Activated CD4-positive, alpha-beta T cell treated with anti-CD3 and anti-CD28 coated beads for 36 hours (primary cell): ENCODE measurements at regions of chr4 and their contacts with region 1.

Region 1: DNA sequence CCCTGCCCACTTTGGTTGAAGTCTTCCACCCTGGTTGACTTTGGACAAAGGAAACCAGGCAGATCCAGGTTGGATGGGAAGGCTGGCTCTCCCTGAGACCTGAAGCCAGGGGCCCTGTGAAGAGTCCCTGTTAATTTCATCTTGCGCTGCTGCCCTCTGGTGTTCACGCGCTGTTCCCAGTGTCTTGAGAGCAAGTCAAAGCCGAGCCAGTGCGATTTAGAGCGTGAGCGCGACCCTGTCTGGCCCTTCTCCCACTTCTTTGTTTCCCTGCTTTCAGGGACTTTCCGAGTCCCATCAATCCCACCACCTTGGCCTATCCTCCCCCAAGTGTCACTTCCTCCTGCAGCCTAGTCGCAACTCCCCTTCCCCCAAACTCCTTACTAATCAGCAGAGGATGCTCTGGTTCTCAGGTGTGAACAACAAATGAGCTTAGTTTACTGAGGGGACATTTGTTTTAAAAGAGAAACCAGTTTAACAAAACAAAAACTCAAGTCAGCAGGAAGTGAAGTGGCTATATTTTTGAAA is 25.8 kb upstream of the CHRNA9 start:
- DNase-seq: peak; percentile 96
- ATAC-seq: peak; percentile 70
- H3K4me3 Mint-ChIP-seq: peak overlapping the region; percentile 71
- H3K27ac Mint-ChIP-seq: peak overlapping the region; percentile 95
- H3K4me1 Mint-ChIP-seq: peaks cover 86% of the 10 kb centered on the region
- H3K27me3 Mint-ChIP-seq: no peaks in the 10 kb centered on the region

Region 2: DNA sequence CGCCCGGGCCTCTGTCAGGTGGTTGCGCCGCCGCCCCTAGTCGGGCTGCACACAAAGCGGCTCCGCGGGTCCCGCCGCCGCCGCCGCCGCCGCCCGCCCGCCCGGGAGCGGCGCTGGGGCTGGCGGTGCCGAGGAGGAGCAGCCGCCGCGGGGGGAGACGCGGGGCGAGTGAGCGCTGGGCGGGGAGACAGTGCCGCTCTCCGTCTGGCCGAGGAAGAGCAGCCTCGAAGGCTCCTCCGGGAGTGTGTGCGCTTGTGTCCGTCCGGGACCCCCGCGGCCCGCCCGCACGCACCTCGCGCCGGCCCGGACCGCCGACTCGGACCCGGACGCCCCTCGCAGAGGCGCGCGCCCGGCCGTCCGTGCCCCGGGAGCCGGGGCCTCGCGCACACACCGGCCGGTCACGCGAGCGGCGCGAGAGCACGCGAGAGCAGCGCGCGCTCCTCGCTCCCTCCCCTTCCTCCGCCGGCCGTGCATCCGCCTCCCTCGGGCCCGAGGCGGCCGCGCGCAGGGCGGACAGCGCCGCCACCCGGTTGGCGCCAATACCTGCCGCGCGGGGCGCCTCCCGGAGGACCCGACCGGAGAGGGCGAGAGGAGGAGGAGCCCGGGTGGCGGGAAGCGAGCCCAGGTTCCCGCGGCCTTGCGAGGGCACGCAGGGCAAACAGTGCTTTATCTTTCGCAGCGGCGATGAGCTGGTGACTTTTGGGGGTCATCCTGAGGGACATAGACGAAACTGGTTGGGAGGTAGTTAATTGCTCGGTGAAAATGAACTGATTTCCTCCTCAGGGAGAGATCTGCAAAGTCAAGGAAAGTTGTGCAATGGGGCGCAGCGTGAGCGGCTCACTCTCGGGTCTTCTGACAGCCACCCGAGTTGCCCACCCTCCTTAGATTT is 331.6 kb before region 1 on chr4 and contains the start of gene PDS5A:
- CTCF ChIA-PET with region 1: interaction called, 5 read pairs
- POLR2A ChIA-PET with region 1: no interaction called
- intact Hi-C with region 1: loop called in 1 of 2 experiments (anchors 5 kb)
- DNase-seq: peak; percentile 95
- ATAC-seq: peak; percentile 90
- H3K4me3 Mint-ChIP-seq: peak within 1 kb of the TSS; percentile 80
- H3K27ac Mint-ChIP-seq: peak within 1 kb of the TSS; percentile 98
- H3K4me1 Mint-ChIP-seq: peaks cover 38% of the 10 kb centered on the region
- H3K27me3 Mint-ChIP-seq: no peaks in the 10 kb centered on the region
- total RNA-seq, gene PDS5A: 98.5 to 102 TPM

Region 3: GRCh38 chr4:40205259-40206198 is 103.8 kb before region 1 on chr4:
- CTCF ChIA-PET with region 1: interaction called, 68 read pairs
- POLR2A ChIA-PET with region 1: interaction called, 15 read pairs
- intact Hi-C with region 1: loop called (anchors 1 kb)
- DNase-seq: peak; percentile 55
- ATAC-seq: peak; percentile 59
- H3K4me3 Mint-ChIP-seq: peak overlapping the region; percentile 98
- H3K27ac Mint-ChIP-seq: peak overlapping the region; percentile 100
- H3K4me1 Mint-ChIP-seq: peaks cover 62% of the 10 kb centered on the region
- H3K27me3 Mint-ChIP-seq: no peaks in the 10 kb centered on the region

Region 4: DNA sequence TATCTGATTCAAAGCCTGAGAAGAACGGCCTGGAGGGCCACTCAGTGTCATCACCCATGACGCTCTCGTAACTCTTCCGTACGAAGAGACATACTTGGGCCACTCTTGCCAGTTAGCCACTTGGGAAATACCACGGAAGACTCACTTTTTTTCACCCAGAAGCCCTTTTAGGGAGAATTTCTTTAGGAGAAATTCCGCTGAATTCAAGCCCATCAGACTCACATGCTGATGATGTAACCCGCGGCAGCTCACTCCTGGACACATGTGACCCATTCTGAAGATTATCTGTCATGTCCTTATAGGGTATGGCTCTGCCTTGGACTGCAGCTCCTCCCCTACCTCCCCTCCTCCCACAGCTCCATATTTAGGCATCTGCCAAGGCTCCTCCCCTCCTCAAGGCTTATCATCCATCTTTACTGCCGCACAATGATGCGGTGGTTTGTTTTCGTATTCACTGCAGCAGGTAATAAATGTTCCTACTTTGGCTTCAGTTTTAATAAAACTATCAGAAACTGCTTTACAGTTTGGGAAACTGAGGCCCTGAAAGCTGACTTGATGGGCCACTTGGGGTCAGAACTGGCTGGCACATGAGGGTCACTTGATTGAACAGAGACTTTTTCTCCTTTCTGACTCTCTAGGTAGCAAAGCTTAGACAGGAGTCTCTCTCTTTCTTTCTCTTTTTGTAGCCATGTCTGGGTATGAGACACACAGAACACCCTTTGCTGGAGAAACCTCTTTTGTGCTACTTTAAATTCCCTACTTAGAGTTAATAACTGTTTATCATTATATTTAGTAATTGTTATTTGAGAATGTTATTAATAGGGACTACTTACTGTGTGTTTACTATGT is 70.4 kb before region 1 on chr4:
- CTCF ChIA-PET with region 1: interaction called, 44 read pairs
- POLR2A ChIA-PET with region 1: interaction called, 3 read pairs
- intact Hi-C with region 1: no loop called
- DNase-seq: peak; percentile 87
- ATAC-seq: peak; percentile 96
- H3K4me3 Mint-ChIP-seq: peak overlapping the region; percentile 76
- H3K27ac Mint-ChIP-seq: peak overlapping the region; percentile 90
- H3K4me1 Mint-ChIP-seq: peaks cover 92% of the 10 kb centered on the region
- H3K27me3 Mint-ChIP-seq: no peaks in the 10 kb centered on the region

Region 5: DNA sequence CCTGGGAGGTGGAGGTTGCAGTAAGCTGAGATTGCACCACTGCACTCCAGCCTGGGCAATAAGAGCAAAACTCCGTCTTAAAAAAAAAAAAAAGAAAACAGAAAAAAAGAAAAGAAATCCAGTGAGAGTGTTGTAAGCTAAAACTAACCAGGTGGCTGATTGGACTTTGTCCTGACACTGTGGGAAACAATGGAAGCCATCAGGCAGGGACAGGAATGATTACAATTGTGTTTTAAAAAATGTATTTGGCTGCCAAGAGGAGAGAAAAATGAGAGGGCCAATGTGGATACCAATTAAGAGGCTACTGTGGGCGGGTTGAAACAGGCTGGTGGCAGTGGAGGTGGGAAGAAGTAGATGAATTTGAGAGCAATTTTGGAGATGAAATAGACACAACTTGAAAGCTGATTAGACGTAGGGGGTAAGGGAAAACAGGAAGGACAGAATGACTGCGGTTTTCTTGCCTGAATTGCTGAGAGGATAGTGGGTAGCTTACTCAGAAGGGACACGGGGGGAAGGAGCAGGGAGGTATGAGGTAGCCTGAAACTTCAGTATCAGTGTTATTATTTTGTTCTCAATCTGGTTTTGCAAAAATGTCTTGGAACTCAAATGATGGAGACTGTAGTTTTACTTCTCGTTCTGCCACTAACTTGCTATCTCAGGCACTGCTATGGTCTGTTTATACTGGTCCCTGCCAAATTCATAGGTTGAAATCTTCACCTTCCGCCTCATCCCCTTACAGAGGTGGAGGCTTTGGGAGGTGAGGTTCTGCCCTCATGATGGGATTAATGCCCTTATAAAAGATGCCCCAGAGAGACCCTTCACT is 19.7 kb before region 1 on chr4:
- CTCF ChIA-PET with region 1: interaction called, 14 read pairs
- POLR2A ChIA-PET with region 1: no interaction called
- intact Hi-C with region 1: loop called in 1 of 2 experiments (anchors 1 kb)
- DNase-seq: no peak
- ATAC-seq: peak; percentile 63
- H3K4me3 Mint-ChIP-seq: peak overlapping the region; percentile 29
- H3K27ac Mint-ChIP-seq: peak overlapping the region; percentile 86
- H3K4me1 Mint-ChIP-seq: peaks cover 54% of the 10 kb centered on the region
- H3K27me3 Mint-ChIP-seq: no peaks in the 10 kb centered on the region